Activated T-helper 1 cell treated with anti-CD3 and anti-CD28 coated beads, Interleukin-12 subunit alpha, Interleukin-12 subunit beta, Interleukin-2, Interleukin-4 antibody, amounts not matched to agents 30 ng/mL and 10 ng/mL and 1 ng/mL, durations not matched to agents 14 hours and 24 hours and 36 hours (primary cell): ENCODE measurements at regions of chr12 and their contacts with region 1.

Region 1: DNA sequence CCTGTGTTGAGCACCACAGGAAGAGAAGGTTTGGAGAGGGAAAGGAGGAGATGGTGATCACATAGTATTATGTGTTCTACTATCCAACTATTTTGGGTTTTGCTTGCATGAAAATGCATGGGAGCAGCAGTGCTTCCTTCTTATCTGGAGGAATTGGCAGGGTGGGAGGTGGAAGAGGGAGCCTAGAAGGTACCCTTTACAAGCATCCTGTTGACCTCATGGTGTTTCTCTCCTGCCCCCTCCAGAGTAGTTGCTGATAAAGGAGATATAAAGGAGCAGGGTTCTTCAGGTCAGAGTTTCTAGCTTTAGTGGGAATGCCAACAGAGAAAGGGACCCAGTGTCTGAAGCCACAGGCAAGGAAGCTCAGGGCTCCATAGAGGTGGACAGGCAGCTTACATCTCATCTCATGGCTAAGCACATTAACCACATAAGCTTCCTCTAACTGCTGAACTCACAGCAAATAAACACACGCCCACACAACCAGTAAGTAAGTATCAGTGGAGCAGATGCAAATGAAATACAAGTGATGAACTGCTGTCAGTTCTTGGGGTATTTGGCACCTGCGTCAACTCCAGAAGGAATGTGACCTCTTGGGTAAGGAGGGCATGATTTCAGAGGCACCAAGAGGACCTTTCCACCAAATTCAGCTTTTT is 174.2 kb upstream of the SLC38A2 start:
- DNase-seq: peak; percentile 19
- H3K4me3 Mint-ChIP-seq: peak overlapping the region; percentile 34
- H3K27ac Mint-ChIP-seq: peak overlapping the region; percentile 89
- H3K4me1 Mint-ChIP-seq: peaks cover 58% of the 10 kb centered on the region
- H3K27me3 Mint-ChIP-seq: no peaks in the 10 kb centered on the region

Region 2: GRCh38 chr12:46516933-46517578 is 29.7 kb before region 1 on chr12:
- intact Hi-C with region 1: loop called (anchors 1 kb)
- DNase-seq: no peak
- H3K4me3 Mint-ChIP-seq: peak overlapping the region; percentile 74
- H3K27ac Mint-ChIP-seq: peak overlapping the region; percentile 98
- H3K4me1 Mint-ChIP-seq: peaks cover 60% of the 10 kb centered on the region
- H3K27me3 Mint-ChIP-seq: no peaks in the 10 kb centered on the region

Region 3: GRCh38 chr12:46523863-46524770 is 22.6 kb before region 1 on chr12:
- intact Hi-C with region 1: loop called (anchors 1 kb)
- DNase-seq: peak; percentile 48
- H3K4me3 Mint-ChIP-seq: peak overlapping the region; percentile 81
- H3K27ac Mint-ChIP-seq: peak overlapping the region; percentile 99
- H3K4me1 Mint-ChIP-seq: peaks cover 52% of the 10 kb centered on the region
- H3K27me3 Mint-ChIP-seq: no peaks in the 10 kb centered on the region

Region 4: DNA sequence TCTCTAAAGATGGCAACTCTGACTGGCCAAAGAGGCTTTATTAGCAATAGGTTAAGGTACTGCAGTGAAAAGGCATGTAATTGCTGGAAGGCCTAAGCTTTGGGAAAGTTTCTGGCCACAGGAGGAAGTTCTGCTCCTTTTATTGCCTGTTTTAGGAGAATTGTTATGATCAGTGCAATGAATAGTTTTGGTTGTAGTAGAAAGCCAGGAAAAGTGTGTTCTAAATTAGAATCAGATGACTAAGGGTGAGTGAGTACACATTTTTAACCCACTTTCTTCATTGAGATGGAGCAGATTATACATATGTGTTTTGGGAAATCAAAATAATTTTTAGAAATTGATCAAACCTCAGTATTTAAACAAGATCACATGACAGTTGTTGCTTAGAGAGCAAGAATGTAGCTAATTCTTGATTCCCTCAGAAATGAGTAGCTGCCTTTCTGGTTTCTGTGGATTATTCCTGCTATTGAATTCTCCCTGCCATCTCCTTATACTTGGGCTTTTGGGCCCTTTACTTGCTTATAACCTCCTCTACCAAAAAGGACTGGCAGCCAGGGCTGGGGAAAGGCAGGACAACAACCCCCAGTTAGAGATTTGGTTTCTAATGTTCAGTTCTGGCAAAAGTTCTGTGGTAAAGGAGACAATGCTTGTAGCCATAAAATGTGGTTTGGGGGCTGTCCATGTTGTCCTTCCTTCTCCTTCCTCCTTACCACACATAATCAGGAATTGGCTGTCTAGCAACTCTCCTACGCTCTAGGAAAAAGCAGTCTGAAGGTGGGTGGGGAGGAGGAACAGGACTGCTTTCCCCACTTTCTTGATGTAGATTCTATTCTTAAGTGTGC is 61.9 kb after region 1 on chr12:
- intact Hi-C with region 1: loop called (anchors 1 kb)
- DNase-seq: no peak
- H3K4me3 Mint-ChIP-seq: peak overlapping the region; percentile 71
- H3K27ac Mint-ChIP-seq: peak overlapping the region; percentile 42
- H3K4me1 Mint-ChIP-seq: peaks cover 29% of the 10 kb centered on the region
- H3K27me3 Mint-ChIP-seq: no peaks in the 10 kb centered on the region

Region 5: GRCh38 chr12:47458270-47458669 is 911.5 kb after region 1 on chr12:
- intact Hi-C with region 1: no loop called
- DNase-seq: no peak
- H3K4me3 Mint-ChIP-seq: no peak overlapping the region
- H3K27ac Mint-ChIP-seq: no peak overlapping the region
- H3K4me1 Mint-ChIP-seq: no peaks in the 10 kb centered on the region
- H3K27me3 Mint-ChIP-seq: peaks cover 2% of the 10 kb centered on the region